ENCODE measurements at regions of chr10 and their contacts with region 1.

Region 1: GRCh38 chr10:132637477-132638129 is 100.0 kb downstream of the INPP5A start:
- DNase-seq: no peak
- H3K4me3 Mint-ChIP-seq: no peak overlapping the region
- H3K27ac Mint-ChIP-seq: no peak overlapping the region
- H3K4me1 Mint-ChIP-seq: peaks cover 9% of the 10 kb centered on the region
- H3K27me3 Mint-ChIP-seq: peaks cover 8% of the 10 kb centered on the region

Region 2: GRCh38 chr10:132223156-132223590 is 414.4 kb before region 1 on chr10:
- intact Hi-C with region 1: loop called (anchors 5 kb)
- DNase-seq: peak; percentile 64
- H3K4me3 Mint-ChIP-seq: no peak overlapping the region
- H3K27ac Mint-ChIP-seq: no peak overlapping the region
- H3K4me1 Mint-ChIP-seq: no peaks in the 10 kb centered on the region
- H3K27me3 Mint-ChIP-seq: no peaks in the 10 kb centered on the region

Region 3: GRCh38 chr10:132387764-132388210 is 249.8 kb before region 1 on chr10:
- intact Hi-C with region 1: loop called (anchors 5 kb)
- DNase-seq: peak; percentile 63
- H3K4me3 Mint-ChIP-seq: peak overlapping the region; percentile 47
- H3K27ac Mint-ChIP-seq: peak overlapping the region; percentile 92
- H3K4me1 Mint-ChIP-seq: peaks cover 1% of the 10 kb centered on the region
- H3K27me3 Mint-ChIP-seq: peaks cover 7% of the 10 kb centered on the region

Region 4: GRCh38 chr10:132458593-132459300 is 178.9 kb before region 1 on chr10:
- intact Hi-C with region 1: loop called (anchors 1 kb)
- DNase-seq: peak; percentile 53
- H3K4me3 Mint-ChIP-seq: no peak overlapping the region
- H3K27ac Mint-ChIP-seq: no peak overlapping the region
- H3K4me1 Mint-ChIP-seq: no peaks in the 10 kb centered on the region
- H3K27me3 Mint-ChIP-seq: peaks cover 2% of the 10 kb centered on the region

Region 5: DNA sequence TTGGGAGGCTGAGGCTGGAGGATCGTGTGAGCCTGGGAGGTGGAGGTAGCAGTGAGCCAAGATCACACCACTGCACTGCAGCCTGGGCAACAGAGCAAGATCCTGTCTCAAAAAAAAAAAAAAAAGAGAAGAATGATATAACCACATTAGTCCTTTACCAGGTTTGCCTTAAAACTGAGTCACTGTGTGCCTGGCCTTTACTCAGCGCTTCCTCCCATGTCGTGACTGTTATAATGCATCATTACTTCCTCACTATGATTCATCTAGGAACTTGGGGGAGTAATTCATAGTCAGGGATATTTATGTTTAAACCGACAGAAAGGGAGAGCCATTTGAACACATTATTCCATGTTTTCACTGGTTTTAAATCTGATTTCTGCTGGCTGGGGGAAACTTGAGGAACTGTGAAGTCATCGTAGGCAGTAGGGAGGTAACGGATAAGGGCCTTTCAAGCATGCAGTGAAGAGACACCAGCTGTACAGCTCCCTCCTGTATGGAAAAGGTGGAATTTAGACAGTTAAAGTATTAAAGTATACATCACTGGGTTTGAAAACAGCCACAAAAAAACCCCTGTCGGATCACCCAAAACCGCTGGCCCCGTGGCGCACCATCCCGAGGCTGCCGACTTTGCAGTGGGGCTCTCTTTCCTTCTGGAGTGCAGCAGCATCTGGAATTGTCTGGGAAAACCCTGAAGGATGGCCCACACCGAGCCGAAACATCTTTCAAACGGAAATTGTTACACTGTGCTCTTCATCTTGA is 28.5 kb after region 1 on chr10:
- intact Hi-C with region 1: no loop called
- DNase-seq: no peak
- H3K4me3 Mint-ChIP-seq: no peak overlapping the region
- H3K27ac Mint-ChIP-seq: no peak overlapping the region
- H3K4me1 Mint-ChIP-seq: peaks cover 10% of the 10 kb centered on the region
- H3K27me3 Mint-ChIP-seq: no peaks in the 10 kb centered on the region

Region 6: DNA sequence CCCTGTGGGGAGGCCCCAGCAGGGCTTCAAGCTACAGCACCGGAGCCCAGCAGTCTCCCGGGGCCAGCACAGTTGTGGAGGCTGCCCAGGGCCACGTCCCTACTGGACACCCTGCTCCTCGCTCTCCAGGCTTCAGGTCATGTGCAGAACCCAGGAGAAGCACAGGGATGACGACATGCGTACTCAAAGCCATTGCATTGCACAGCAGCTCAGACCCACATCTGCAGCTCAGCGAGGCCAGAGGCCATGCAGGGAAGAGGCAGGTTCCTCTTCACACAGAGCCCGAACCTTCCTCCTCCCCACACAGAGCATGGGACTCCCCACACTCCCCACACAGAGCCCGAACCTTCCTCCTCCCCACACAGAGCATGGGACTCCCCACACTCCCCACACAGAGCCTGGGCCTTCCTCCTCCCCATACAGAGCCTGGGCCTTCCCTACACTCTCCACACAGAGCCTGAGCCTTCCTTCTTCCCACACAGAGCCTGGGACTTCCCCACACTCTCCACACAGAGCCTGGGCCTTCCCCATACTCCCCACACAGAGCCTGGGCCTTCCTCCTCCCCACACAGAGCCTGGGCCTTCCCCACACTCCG is 292.4 kb after region 1 on chr10:
- intact Hi-C with region 1: no loop called
- DNase-seq: no peak
- H3K4me3 Mint-ChIP-seq: no peak overlapping the region
- H3K27ac Mint-ChIP-seq: no peak overlapping the region
- H3K4me1 Mint-ChIP-seq: no peaks in the 10 kb centered on the region
- H3K27me3 Mint-ChIP-seq: no peaks in the 10 kb centered on the region